Endothelial cell of umbilical vein (primary cell): ENCODE measurements at regions of chr11 and their contacts with region 1.

Region 1: DNA sequence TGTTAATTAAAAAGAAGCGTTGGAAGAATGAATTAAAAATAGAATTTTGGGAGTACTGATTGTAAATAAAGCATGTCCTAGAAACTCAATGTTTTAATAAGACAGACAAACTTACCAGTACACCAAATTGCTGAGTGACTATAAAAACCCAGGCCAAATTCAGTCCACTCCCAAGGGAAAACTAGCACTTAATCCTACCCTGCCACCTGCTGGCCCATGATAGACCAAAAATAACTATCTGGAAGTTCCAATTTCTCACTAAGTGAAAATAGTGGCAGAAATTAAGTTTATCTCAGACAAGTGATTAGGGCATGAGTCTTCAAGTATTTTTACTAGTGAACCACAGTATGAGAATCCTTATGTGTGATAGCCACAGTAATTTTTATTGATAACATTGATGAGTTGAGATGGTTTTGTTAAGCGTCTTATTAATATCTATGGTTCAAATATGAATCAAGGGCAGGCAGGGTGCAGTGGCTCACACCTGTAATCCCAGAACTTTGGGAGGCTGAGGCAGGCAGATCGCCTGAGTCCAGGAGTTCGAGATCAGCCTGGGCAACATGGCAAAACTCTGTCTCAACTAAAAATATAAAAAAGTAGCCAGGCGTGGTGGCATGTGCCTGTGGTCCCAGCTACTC is 9.8 kb upstream of the DDX10 start:
- DNase-seq: peak; percentile 47
- H3K4me3 ChIP-seq: no peak overlapping the region
- H3K27ac ChIP-seq: no peak overlapping the region
- H3K4me1 ChIP-seq: no peaks in the 10 kb centered on the region
- H3K27me3 ChIP-seq: no peaks in the 10 kb centered on the region
- CTCF ChIP-seq: peak; percentile 36 to 54
- POLR2A ChIP-seq: no peak

Region 2: DNA sequence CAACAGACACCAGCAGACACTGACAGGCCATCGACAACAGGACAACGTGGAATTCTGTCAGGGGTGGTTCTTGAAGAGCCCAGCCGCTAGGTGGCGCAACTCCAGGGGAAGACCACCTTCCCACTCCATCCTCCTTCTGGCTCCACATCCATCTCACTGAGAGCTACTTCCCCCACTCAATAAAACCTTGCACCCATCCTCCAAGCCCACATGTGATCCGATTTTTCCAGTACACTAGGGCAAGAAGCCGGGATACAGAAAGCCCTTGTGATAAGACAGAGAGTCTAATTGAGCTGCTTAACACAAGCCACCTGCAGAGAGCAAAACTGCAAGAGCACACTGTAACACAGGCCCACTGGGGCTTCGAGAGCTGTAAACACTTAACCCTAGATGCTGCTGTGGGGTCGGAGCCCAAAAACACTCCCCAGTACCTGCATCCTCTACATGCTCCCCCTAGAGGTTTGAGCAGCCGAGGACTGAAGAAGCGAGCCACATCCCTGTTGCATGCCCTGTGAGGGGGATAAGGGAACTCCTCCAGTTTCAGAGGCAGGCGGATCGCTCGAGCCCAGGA is 738.4 kb before region 1 on chr11:
- CTCF ChIA-PET with region 1: interaction called, 25 read pairs
- POLR2A ChIA-PET with region 1: no interaction called
- dilution Hi-C with region 1: no loop called
- intact Hi-C with region 1: no loop called
- DNase-seq: no peak
- H3K4me3 ChIP-seq: no peak overlapping the region
- H3K27ac ChIP-seq: no peak overlapping the region
- H3K4me1 ChIP-seq: no peaks in the 10 kb centered on the region
- H3K27me3 ChIP-seq: no peaks in the 10 kb centered on the region
- CTCF ChIP-seq: peak in 1 of 2 donors; percentile 65
- POLR2A ChIP-seq: no peak

Region 3: GRCh38 chr11:107999759-108000455 is 655.2 kb before region 1 on chr11:
- CTCF ChIA-PET with region 1: interaction called, 29 read pairs
- POLR2A ChIA-PET with region 1: no interaction called
- dilution Hi-C with region 1: no loop called
- intact Hi-C with region 1: no loop called
- DNase-seq: peak; percentile 61
- H3K4me3 ChIP-seq: no peak overlapping the region
- H3K27ac ChIP-seq: no peak overlapping the region
- H3K4me1 ChIP-seq: no peaks in the 10 kb centered on the region
- H3K27me3 ChIP-seq: peaks cover 2 to 3% of the 10 kb centered on the region in 2 experiments
- CTCF ChIP-seq: peak; percentile 27 to 52
- POLR2A ChIP-seq: no peak

Region 4: DNA sequence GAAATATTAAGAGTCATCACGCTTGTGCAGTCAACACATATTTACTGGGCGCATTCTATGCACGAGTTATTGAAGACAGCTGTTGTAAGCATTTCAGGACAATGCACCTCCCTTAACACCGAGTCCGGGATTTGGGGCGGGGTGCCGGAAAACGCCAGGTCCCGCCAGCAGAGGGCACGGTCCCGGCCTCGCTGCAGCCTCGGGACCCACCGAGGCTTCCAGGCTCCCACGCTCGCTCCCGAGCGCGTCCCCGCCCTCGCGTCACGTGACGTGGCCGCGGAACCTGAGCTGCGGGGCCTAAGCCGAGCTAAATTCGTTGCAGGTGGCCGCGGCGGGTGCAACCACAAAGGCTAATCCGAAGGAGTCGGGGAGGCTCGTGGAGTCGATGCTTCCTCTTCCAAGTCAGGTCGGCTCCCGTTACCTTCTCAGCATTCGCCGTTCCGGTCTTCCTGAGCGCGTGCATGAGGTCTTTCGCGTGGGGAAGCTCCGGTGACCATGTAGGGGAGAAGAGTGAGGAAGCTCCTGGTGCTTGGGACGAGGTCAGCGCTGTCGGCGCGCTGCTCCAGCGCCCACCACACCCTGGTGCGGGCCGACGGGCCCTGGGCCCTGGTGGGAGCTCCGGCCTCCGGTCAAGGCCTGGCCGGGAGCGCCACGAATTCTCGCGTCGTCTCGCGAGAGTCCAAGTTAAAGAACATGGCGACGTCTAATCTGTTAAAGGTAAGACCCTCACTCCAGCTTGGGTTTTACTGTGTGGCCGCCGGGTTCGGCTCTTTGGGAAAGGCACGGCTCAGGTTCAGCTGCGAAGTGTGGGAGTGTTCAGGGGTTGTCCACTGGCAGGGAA is 646.2 kb before region 1 on chr11 and contains the start of gene CUL5:
- CTCF ChIA-PET with region 1: interaction called, 10 read pairs
- POLR2A ChIA-PET with region 1: no interaction called
- dilution Hi-C with region 1: no loop called
- intact Hi-C with region 1: no loop called
- DNase-seq: peak; percentile 90
- H3K4me3 ChIP-seq: peak within 1 kb of the TSS; percentile 44 to 88 (median 60)
- H3K27ac ChIP-seq: peak within 1 kb of the TSS; percentile 75
- H3K4me1 ChIP-seq: peaks cover 12% of the 10 kb centered on the region
- H3K27me3 ChIP-seq: no peaks in the 10 kb centered on the region
- CTCF ChIP-seq: peak; percentile 91 to 96
- POLR2A ChIP-seq: peak; percentile 91
- total RNA-seq, gene CUL5: 36.6 and 37.6 TPM in 2 replicates

Region 5: DNA sequence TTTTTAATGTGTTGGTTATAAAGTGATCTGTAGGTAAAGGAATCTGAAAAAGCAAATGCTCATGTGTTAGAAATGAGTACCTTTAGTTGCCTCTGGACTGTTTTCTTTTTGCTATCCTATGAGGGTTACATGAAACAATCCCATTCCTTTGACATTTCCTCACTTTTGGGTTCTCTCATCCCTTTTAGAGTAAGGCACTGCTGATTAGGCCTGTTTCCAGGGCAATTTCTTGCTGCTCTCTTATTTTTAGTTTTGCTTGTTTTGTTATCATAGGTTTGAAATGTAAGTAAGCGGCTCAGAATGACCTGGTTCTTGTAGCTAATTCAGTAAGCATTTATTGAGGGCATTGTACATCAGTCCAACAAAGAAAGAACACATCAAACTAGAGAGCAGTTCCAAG is 148.7 kb after region 1 on chr11:
- CTCF ChIA-PET with region 1: no interaction called
- POLR2A ChIA-PET with region 1: no interaction called
- dilution Hi-C with region 1: no loop called
- intact Hi-C with region 1: no loop called
- DNase-seq: no peak
- H3K4me3 ChIP-seq: no peak overlapping the region
- H3K27ac ChIP-seq: no peak overlapping the region
- H3K4me1 ChIP-seq: no peaks in the 10 kb centered on the region
- H3K27me3 ChIP-seq: no peaks in the 10 kb centered on the region
- CTCF ChIP-seq: no peak
- POLR2A ChIP-seq: no peak